Vagina (tissue), 2 donors: ENCODE measurements at regions of chr5 and their contacts with region 1.

Region 1: DNA sequence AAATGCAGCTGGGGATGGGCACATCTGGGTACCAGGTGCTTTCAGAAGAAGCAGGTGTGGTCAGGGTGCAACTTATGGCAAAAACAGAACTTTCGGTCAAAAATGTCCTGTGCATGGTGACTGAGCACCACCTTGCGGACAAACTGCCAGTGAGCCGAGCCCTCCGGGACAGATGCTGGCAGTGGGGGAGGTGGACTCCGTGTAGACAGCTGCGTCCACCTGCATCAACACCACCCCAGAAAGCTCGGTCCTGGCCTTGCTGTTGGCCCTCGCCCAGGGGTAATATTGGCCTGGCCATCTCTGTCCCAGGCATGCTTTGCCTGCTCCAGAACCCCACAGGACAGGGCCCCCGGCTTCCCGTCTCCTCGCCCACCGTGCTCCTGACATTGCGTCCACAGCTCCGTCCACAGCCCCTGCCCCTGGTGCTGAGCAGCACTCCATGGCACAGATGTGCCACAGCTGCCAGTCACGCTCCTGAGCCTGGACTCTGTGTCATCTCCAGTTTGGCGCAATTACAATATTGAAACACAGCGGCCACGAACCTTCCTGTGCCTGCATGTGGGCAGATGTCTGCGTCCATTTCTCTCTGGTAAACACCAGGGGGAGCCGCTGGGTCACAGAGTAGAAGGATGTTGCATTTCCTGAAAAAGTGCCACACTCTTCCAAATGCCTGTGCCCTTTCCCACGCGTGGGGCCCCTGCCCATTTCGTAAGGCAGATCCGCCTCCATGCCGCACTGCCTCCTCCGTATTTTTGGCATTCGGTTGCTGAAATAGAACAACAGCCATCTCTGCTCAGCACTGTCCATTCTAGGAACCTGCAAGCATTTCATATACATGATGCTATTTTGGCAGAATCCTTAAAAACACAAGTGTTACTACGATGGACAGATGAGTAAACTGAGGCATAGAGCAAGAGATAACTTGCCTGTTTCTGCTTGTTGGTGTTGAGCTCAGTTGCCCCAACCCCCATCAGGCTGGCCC is 33.4 kb upstream of the SLC6A19 start:
- DNase-seq: no peak
- H3K4me3 ChIP-seq: peak overlapping the region in 1 of 2 donors; percentile 30
- H3K27ac ChIP-seq: no peak overlapping the region
- H3K4me1 ChIP-seq: peaks cover 8% of the 10 kb centered on the region
- H3K27me3 ChIP-seq: no peaks in the 10 kb centered on the region
- CTCF ChIP-seq: peak; percentile 57 to 70 (median 63)
- POLR2A ChIP-seq: no peak

Region 2: GRCh38 chr5:923281-923873 is 244.6 kb before region 1 on chr5:
- intact Hi-C with region 1: loop called (anchors 10 kb)
- DNase-seq: peak in 1 of 2 donors; percentile 70
- H3K4me3 ChIP-seq: no peak overlapping the region
- H3K27ac ChIP-seq: no peak overlapping the region
- H3K4me1 ChIP-seq: peaks cover 13% of the 10 kb centered on the region
- H3K27me3 ChIP-seq: no peaks in the 10 kb centered on the region
- CTCF ChIP-seq: peak; percentile 40 to 81 (median 67)
- POLR2A ChIP-seq: no peak